Mammary epithelial cell (primary cell): ENCODE measurements at regions of chr15 and their contacts with region 1.

Region 1: GRCh38 chr15:51829360-51830275 is at the start of gene TMOD3:
- DNase-seq: peak; percentile 86
- H3K4me3 ChIP-seq: peak within 1 kb of the TSS; percentile 92 to 98 (median 92)
- H3K27ac ChIP-seq: peak within 1 kb of the TSS; percentile 88
- H3K4me1 ChIP-seq: peaks cover 42% of the 10 kb centered on the region
- H3K27me3 ChIP-seq: no peaks in the 10 kb centered on the region
- CTCF ChIP-seq: no peak
- total RNA-seq, gene TMOD3: 50.3 to 124 TPM

Region 2: DNA sequence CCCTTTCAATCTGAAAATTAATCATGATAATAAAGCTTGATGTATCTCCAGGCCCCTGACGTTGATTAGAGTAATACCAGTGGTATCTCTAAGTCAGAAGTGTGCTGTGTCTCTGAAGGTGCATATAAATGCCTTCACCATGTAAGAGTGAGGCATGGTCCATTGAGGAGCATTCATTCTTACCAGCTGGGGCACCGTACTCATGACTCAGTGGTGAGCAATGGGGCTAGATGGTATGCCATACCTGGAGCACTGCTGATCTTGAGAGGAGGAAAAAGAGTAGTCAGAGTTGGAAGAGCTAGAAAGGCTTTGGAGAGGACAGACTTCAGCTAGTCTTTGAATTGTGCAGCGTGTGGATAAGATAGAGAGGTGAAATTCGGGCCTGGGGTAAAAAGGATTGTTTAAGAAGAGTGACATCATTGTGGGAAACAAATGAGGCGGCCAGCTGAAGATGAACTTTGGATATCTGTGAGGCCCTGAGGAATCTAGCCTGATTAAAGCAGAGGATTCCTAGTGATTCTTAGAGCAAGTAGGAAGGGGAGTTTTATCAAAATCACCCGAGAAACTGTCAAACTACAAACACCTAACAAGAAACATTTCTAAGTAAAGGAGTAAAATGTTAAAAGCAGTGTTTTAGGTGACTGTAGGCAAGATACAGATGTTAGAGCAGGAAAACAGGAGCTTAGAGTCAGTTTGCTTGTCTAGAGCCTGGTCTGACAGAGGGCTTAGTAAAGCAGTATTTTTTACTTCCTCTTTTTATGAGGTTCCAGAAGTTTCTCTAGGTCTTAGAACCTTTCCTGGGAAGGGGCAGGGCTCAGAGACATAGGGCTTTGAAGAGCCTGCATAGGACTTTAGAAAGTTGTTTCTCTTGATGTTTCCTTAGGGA is 13.5 kb after region 1 on chr15:
- CTCF ChIA-PET with region 1: no interaction called
- dilution Hi-C with region 1: no loop called
- in situ Hi-C with region 1: no loop called
- intact Hi-C with region 1: loop called (anchors 1 kb)
- DNase-seq: peak; percentile 94
- H3K4me3 ChIP-seq: no peak overlapping the region
- H3K27ac ChIP-seq: peak overlapping the region; percentile 83
- H3K4me1 ChIP-seq: peaks cover 60% of the 10 kb centered on the region
- H3K27me3 ChIP-seq: no peaks in the 10 kb centered on the region
- CTCF ChIP-seq: no peak

Region 3: DNA sequence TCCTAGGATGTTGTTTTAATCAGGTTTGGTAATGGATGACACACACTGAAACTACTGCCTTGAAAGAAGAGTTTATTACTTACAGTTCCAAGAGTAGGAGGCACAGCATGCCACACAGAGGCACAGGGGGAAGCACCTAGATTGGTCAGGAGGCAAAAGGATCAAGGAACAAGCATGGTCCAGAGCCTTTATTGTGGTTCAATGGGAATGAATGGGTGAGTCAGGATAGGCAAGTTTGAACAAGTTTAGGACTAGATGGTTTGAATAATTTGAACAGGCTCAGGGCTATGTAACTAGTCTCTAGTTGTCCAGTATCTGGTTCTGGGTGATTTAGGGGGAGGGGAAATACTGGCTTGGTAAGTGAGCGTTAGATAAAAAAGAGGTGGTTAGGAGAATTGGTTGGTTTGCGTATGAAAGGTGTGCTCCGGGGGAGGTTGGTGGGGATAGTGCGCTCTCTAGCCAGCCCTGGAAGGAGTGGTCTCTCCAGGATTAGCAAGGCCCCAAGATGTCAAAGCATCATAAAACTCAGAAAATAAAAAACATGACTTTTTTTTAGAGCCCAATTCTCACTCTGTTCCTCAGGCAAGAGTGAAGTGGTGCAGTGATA is 34.9 kb after region 1 on chr15:
- CTCF ChIA-PET with region 1: no interaction called
- dilution Hi-C with region 1: no loop called
- in situ Hi-C with region 1: no loop called
- intact Hi-C with region 1: loop called (anchors 1 kb)
- DNase-seq: peak; percentile 100
- H3K4me3 ChIP-seq: no peak overlapping the region
- H3K27ac ChIP-seq: peak overlapping the region; percentile 94
- H3K4me1 ChIP-seq: peaks cover 55% of the 10 kb centered on the region
- H3K27me3 ChIP-seq: no peaks in the 10 kb centered on the region
- CTCF ChIP-seq: no peak

Region 4: DNA sequence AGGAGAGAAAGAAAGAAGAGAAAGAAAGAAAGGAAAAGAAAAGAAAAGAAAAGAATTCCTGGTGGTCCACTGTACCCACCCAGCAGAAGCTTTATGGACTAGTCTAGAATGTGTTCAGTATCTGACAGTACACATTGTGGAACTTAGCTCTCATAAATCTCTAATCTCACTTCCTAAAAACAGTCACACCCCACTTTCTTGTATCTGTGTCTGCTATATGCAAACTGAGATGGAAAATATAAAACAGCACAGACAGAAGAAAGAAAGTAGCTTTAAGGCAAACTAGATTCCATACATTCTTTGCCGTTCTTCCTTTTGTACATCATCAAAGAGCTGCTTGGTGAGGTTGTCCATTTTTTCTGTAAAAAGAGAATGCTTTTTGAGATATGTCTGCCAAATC is 402.7 kb after region 1 on chr15:
- CTCF ChIA-PET with region 1: no interaction called
- dilution Hi-C with region 1: no loop called
- in situ Hi-C with region 1: no loop called
- intact Hi-C with region 1: no loop called
- DNase-seq: no peak
- H3K4me3 ChIP-seq: no peak overlapping the region
- H3K27ac ChIP-seq: no peak overlapping the region
- H3K4me1 ChIP-seq: peaks cover 3% of the 10 kb centered on the region
- H3K27me3 ChIP-seq: no peaks in the 10 kb centered on the region
- CTCF ChIP-seq: no peak